B cell (primary cell): ENCODE measurements at regions of chr14 and their contacts with region 1.

Region 1: DNA sequence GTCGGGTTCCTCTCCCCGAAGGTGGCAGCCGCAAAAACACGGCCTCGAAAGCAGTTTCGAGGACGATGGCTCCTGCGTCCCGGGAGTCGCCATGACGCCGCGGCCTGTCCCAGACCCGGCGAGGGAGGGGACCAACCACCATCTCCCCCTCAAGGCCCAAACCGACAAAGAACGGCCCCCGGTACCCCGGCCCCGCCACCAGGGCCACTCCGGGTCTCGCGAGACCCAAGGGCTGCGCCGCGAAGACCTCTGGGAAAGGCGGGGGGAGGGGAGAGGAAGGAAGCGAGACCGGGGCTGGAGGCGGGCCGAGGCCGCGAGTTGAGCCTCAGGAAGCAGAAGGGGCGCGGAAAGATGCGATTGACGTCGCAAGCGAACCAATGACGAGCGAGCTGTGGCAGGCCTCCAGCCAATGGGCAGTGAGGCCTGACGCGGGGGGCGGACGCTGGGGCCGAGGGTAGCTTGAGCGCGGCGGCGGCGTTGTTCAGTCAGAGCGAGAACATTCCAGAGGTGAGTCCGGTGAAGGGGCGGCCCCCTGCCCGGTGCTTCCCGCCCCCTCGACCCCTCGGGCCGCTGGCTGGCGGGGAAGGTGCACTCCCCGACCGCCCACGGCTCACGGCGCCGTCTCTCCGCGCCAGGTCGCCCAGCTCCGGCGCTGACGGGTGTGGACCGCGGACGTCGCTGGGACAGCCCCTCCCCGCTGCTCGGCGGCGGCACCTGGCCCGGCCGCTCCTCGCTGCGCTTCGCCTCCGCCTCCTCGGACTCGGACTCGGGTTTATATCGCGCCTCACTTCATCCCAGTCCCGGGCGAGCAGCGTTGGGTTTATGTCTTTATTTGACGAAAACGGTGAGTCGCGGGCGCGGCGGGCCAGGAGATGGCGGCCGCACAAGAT is at the start of gene EIF5:
- DNase-seq: peak; percentile 100
- ATAC-seq: peak; percentile 85
- H3K4me3 ChIP-seq: peak within 1 kb of the TSS; percentile 78 to 100 (median 94)
- H3K4me3 Mint-ChIP-seq: peak within 1 kb of the TSS; percentile 96
- H3K27ac ChIP-seq: peak within 1 kb of the TSS; percentile 98 to 99
- H3K27ac Mint-ChIP-seq: peak within 1 kb of the TSS; percentile 100
- H3K4me1 ChIP-seq: peaks cover 17 to 25% of the 10 kb centered on the region in 2 donors
- H3K4me1 Mint-ChIP-seq: peaks cover 42% of the 10 kb centered on the region
- H3K27me3 ChIP-seq: no peaks in the 10 kb centered on the region
- H3K27me3 Mint-ChIP-seq: no peaks in the 10 kb centered on the region
- CTCF ChIP-seq: peak; percentile 51
- total RNA-seq, gene EIF5: 314 TPM in 2 replicates

Region 2: GRCh38 chr14:103385152-103385993 is 51.4 kb after region 1 on chr14 and contains the start of gene MARK3:
- CTCF ChIA-PET with region 1: interaction called, 3 read pairs
- POLR2A ChIA-PET with region 1: interaction called, 20 read pairs
- intact Hi-C with region 1: loop called (anchors 1 kb)
- DNase-seq: peak; percentile 98
- ATAC-seq: peak; percentile 86
- H3K4me3 ChIP-seq: peak within 1 kb of the TSS; percentile 68 to 96 (median 90)
- H3K4me3 Mint-ChIP-seq: peak within 1 kb of the TSS; percentile 99
- H3K27ac ChIP-seq: peak within 1 kb of the TSS; percentile 90 to 91
- H3K27ac Mint-ChIP-seq: peak within 1 kb of the TSS; percentile 98
- H3K4me1 ChIP-seq: peaks cover 24 to 33% of the 10 kb centered on the region in 2 donors
- H3K4me1 Mint-ChIP-seq: peaks cover 41% of the 10 kb centered on the region
- H3K27me3 ChIP-seq: no peaks in the 10 kb centered on the region
- H3K27me3 Mint-ChIP-seq: peaks cover 13% of the 10 kb centered on the region
- CTCF ChIP-seq: peak; percentile 40
- total RNA-seq, gene MARK3: 139 and 142 TPM in 2 replicates

Region 3: DNA sequence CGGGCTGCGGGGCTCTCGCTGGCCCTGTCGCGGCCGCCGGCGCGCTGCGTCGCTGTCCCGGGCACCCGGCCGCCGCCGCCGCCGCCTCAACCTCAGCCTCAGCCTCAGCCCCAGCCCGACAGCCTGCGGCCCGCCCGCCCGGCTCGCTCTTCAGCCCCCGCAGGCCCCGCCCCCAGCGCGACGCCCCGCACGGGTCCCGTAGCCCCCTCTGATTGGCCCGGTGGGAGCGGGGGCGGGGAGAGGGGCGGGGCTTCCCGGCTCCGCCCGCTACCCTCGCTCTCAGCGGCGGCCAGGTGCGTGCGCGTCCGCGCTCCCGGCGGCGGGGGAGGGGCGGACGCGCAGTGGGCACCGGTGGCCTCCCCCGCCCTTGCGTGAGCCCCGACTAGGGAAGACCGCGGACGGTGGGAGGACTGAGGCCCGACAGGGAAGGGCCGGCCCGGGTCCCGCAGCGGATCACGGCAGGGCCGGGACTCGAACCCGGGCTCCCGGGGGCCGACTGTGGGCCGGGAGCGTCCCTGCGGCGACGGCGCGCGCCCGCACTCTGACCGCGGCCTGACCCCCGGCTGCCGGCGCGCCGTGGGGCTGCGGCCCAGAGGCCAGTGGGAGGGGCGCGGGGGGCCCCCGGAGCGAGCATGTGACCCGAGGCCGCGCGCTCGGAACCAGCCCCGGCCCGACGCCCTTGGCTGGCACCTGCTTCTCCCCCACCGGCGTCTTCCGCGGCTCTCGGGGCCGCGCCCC is 513.6 kb after region 1 on chr14 and contains the start of gene PPP1R13B:
- CTCF ChIA-PET with region 1: no interaction called
- POLR2A ChIA-PET with region 1: no interaction called
- intact Hi-C with region 1: loop called (anchors 10 kb)
- DNase-seq: peak; percentile 95
- ATAC-seq: peak; percentile 97
- H3K4me3 ChIP-seq: peak within 1 kb of the TSS; percentile 44 to 73 (median 60)
- H3K4me3 Mint-ChIP-seq: peak within 1 kb of the TSS; percentile 91
- H3K27ac ChIP-seq: peak within 1 kb of the TSS in 1 of 2 donors; percentile 59
- H3K27ac Mint-ChIP-seq: peak within 1 kb of the TSS; percentile 83
- H3K4me1 ChIP-seq: peaks cover 10 to 14% of the 10 kb centered on the region in 2 donors
- H3K4me1 Mint-ChIP-seq: peaks cover 16% of the 10 kb centered on the region
- H3K27me3 ChIP-seq: no peaks in the 10 kb centered on the region
- H3K27me3 Mint-ChIP-seq: no peaks in the 10 kb centered on the region
- CTCF ChIP-seq: no peak
- total RNA-seq, gene PPP1R13B: 27.7 and 38.6 TPM in 2 replicates